WTC11 (cell line): ENCODE measurements at regions of chr6 and their contacts with region 1.

Region 1: GRCh38 chr6:89610149-89610642 is 28.4 kb downstream of the LYRM2 start:
- DNase-seq: peak; percentile 86
- ATAC-seq: peak; percentile 77
- H3K4me3 Mint-ChIP-seq: no peak overlapping the region
- H3K27ac Mint-ChIP-seq: no peak overlapping the region
- H3K4me1 Mint-ChIP-seq: 0 out of 2 replicates have a peak, but pooled peaks cover 2% of the 10 kb centered on the region
- H3K27me3 Mint-ChIP-seq: no peaks in the 10 kb centered on the region
- CTCF ChIP-seq: peak; percentile 83

Region 2: GRCh38 chr6:89432875-89433251 is 177.3 kb before region 1 on chr6 and contains the start of gene ANKRD6:
- CTCF ChIA-PET with region 1: interaction called, 61 read pairs
- POLR2A ChIA-PET with region 1: no interaction called
- DNase-seq: peak; percentile 84
- ATAC-seq: peak; percentile 87
- H3K4me3 Mint-ChIP-seq: peak within 1 kb of the TSS; percentile 83
- H3K27ac Mint-ChIP-seq: no peak within 1 kb of the TSS
- H3K4me1 Mint-ChIP-seq: peaks cover 33% of the 10 kb centered on the region
- H3K27me3 Mint-ChIP-seq: peaks cover 42% of the 10 kb centered on the region
- CTCF ChIP-seq: peak; percentile 97
- total RNA-seq, gene ANKRD6: 10.9 to 13.9 TPM (median 12.6 TPM) in 3 replicates

Region 3: DNA sequence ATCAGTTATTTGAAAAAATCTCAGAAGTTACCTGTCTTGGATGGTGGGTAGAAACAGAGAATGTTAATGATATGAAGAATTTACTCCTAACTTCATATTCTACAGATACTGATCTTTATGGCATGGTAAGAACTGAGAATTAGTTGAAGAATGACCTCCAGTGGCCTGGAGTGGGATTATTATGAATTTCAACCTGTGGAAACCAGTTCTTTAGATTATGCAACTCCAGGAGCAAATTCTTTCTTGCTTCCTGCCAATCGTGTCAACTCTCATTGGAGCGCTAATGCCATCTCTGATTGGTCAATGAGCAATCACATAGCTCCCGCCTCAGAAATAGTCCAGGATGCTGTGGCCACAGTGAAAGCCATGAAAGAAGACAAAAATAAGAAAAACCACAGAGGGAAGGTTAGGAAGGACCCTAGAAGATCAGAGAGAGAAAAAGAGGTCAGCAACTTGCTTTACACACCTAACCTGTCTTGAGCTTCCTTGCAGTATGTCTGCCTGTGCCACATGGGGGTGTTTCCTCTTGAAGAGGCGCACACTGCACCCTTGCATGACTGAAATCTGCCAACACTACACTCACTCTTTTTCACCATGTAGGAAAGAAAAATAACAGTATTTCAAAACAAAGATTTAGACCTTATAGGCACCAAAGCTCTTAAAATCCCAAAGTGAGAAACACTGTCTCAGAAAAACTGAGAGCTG is 12.1 kb before region 1 on chr6:
- CTCF ChIA-PET with region 1: interaction called, 21 read pairs
- POLR2A ChIA-PET with region 1: no interaction called
- DNase-seq: no peak
- ATAC-seq: peak; percentile 45
- H3K4me3 Mint-ChIP-seq: no peak overlapping the region
- H3K27ac Mint-ChIP-seq: no peak overlapping the region
- H3K4me1 Mint-ChIP-seq: no peaks in the 10 kb centered on the region
- H3K27me3 Mint-ChIP-seq: no peaks in the 10 kb centered on the region
- CTCF ChIP-seq: no peak

Region 4: GRCh38 chr6:89866024-89866678 is 256.0 kb after region 1 on chr6:
- CTCF ChIA-PET with region 1: no interaction called
- POLR2A ChIA-PET with region 1: no interaction called
- DNase-seq: no peak
- ATAC-seq: no peak
- H3K4me3 Mint-ChIP-seq: no peak overlapping the region
- H3K27ac Mint-ChIP-seq: no peak overlapping the region
- H3K4me1 Mint-ChIP-seq: no peaks in the 10 kb centered on the region
- H3K27me3 Mint-ChIP-seq: no peaks in the 10 kb centered on the region
- CTCF ChIP-seq: no peak